ENCODE measurements at regions of chr10 and their contacts with region 1.

Region 1: GRCh38 chr10:75623310-75624093 is 192.1 kb downstream of the LRMDA start:
- DNase-seq: no peak
- H3K4me3 ChIP-seq: no peak overlapping the region
- H3K27ac ChIP-seq: no peak overlapping the region
- H3K4me1 ChIP-seq: peaks cover 3% of the 10 kb centered on the region in 2 donors
- H3K27me3 ChIP-seq: no peaks in the 10 kb centered on the region
- CTCF ChIP-seq: no peak

Region 2: GRCh38 chr10:75431180-75432111 is 192.1 kb before region 1 on chr10 and contains the start of gene LRMDA:
- intact Hi-C with region 1: loop called (anchors 5 kb)
- DNase-seq: peak in 1 of 2 donors; percentile 71
- H3K4me3 ChIP-seq: peak within 1 kb of the TSS; percentile 78 to 85
- H3K27ac ChIP-seq: peak within 1 kb of the TSS; percentile 39 to 42
- H3K4me1 ChIP-seq: peaks cover 0 to 12% of the 10 kb centered on the region in 2 donors
- H3K27me3 ChIP-seq: no peaks in the 10 kb centered on the region
- CTCF ChIP-seq: no peak
- total RNA-seq, gene LRMDA: 0.96 TPM

Region 3: DNA sequence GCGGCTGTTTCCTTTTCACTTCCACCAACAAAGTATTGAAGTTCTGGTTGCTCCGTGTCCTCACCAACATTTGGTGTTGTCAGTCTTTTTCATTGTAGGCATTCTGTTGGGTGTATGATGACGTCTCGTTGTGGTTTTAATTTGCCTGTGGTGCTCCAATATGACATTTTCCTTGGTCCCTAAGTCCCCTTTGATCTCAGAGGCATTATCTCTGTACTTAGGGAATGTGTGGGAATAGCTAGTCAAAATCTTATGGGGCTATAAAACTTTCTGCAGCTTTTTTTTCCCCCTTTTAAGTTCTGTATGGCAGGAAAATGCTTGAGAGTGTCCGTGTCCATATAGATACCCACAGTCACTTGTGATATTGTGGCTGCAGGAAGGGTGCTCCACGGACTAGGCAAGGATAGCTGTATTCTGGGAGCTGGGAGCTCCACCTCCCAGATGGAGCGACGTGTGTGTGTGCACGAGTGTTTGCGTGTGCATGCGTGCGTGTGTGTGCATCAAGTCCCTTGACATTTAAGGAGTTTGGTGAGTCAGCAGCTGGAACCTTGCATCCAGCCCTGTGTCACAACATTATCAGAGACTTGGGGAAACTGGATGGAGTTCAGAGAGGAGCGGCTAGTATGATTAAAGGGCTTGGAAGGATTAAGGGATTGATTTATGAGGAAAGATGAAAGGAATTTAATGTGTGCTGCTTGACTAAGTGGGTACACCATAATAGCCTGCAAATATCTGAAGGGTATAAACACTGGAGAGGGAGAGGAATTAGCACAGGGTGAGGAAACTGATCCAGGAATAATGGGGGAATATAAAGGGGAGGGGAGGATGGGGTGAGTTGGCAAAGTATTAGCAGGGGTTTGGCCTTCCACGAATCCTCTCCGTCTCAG is 125.3 kb before region 1 on chr10:
- intact Hi-C with region 1: no loop called
- DNase-seq: peak in 1 of 2 donors; percentile 66
- H3K4me3 ChIP-seq: no peak overlapping the region
- H3K27ac ChIP-seq: no peak overlapping the region
- H3K4me1 ChIP-seq: peaks cover 0 to 5% of the 10 kb centered on the region in 2 donors
- H3K27me3 ChIP-seq: no peaks in the 10 kb centered on the region
- CTCF ChIP-seq: no peak

Measured in ascending aorta (tissue), 2 donors.